OCI-LY7 (cell line): ENCODE measurements at regions of chr1 and their contacts with region 1.

Region 1: DNA sequence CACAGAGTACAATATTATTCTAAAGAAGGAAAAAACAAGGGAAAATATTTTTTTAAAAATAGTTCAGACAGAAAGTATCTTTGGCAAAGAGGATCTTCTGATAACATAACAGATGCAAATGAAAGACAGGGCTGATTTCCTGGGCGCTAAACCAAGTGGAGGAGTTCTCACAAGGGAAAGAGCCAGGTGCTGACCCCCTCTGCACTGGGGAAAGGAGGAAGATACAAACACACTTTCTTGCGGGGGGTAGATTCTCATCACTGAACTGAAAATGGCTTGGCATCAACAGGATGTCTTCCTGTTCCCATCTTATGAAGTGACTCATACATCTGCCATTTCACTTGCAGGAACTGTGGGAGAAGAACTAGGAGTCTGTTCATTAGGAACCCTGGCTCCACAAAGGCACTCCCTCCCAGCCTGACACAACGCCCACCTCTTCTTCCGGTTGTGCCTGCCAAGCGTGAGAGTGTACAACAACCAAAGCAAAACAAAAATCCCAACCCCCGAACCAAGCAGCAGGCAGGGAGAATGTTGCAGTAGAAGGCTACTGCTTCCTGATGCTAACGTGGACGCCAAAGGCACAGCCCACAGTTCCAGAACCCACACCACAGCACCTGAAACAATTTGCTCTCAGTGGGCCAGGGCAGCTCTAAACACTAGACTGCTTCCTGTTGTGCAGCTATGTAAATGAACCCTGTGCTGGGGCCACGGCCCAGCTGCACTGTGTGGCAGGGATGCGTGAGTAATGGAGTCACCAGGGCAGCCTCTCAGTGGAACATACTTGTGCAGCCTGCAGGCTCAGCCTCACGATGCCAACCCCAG is 51.0 kb downstream of the GADD45A start:
- DNase-seq: peak; percentile 93
- H3K4me3 ChIP-seq: peak overlapping the region; percentile 67
- H3K27ac ChIP-seq: peak overlapping the region; percentile 96
- H3K4me1 ChIP-seq: peaks cover 74% of the 10 kb centered on the region
- CTCF ChIP-seq: no peak

Region 2: DNA sequence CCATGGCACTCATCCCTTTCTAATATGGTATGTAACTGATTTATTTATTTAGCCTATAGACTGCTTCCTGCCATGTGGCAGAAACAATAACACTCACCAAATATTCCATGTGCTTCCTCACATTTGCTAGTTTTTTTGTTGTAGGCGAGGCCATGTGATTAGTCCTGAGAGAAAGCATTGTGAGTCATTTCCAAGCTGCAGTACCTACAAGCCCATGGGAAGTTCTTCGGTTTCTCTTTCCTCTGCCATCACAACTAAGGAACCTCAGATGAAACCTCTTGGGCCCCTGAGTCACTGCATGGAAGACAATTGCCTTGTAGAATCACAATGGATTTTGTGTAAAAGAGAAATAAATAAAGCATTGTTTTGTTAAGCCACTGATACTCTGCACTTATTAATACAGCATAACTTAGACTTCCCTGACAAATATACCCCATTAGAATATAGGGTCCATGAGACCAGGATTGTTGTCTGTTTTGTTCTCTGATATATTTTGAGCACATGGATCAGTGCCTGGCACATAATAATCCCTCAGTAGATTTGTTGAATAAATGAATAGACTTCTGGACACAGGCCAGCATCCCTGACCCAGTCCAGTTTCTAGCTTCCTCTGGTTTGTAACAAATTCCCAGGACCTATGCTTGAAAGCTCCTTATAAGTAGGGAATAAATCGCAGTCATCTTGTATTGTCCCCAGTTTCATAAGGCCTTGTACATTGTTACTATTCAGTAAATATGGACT is 109.4 kb before region 1 on chr1:
- CTCF ChIA-PET with region 1: no interaction called
- POLR2A ChIA-PET with region 1: no interaction called
- intact Hi-C with region 1: no loop called
- DNase-seq: no peak
- H3K4me3 ChIP-seq: no peak overlapping the region
- H3K27ac ChIP-seq: no peak overlapping the region
- H3K4me1 ChIP-seq: no peaks in the 10 kb centered on the region
- CTCF ChIP-seq: no peak

Region 3: GRCh38 chr1:67674260-67675011 is 61.6 kb before region 1 on chr1:
- CTCF ChIA-PET with region 1: no interaction called
- POLR2A ChIA-PET with region 1: interaction called, 38 read pairs
- intact Hi-C with region 1: loop called (anchors 2 kb)
- DNase-seq: peak; percentile 77
- H3K4me3 ChIP-seq: peak overlapping the region; percentile 20
- H3K27ac ChIP-seq: peak overlapping the region; percentile 85
- H3K4me1 ChIP-seq: peaks cover 48% of the 10 kb centered on the region
- CTCF ChIP-seq: no peak

Region 4: DNA sequence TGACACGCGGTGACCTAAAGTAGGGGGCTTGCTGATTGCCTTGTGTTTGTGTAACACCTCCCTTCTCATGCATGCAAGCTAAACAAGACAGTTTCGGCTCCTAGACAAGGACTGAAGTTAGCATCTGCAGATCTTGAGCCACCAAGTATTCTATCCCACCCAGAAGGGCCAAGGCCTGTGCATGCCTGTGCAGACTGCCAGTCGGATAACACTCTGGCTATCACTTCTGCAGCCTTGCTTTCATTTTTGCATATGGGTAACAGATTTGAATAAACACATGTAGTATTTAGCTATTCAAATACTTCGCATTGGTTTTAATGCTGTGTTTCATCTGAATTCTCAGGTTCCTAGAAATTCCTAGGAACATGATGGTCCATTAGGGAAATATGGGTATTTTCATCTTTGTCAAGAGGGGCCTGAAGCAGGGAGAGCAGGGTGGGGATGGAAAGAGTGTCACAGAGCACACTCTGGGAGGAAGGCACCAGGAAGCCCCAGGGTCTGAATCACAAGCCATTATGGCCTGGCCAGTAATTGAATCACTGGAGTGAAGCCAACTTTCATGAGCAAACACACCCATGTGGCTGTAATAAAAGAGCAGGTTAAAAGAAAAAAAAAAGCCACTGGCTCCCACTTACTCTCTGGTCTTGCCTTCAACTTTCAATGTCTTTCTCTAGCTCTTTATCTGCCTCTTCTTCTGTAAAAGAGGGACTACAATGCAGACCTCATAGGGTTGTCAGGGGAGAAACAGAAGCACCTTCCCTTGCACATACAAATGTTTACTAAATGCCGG is 22.8 kb before region 1 on chr1:
- CTCF ChIA-PET with region 1: interaction called, 4 read pairs
- POLR2A ChIA-PET with region 1: interaction called, 21 read pairs
- intact Hi-C with region 1: loop called (anchors 2 kb)
- DNase-seq: peak; percentile 63
- H3K4me3 ChIP-seq: peak overlapping the region; percentile 10
- H3K27ac ChIP-seq: peak overlapping the region; percentile 67
- H3K4me1 ChIP-seq: peaks cover 44% of the 10 kb centered on the region
- CTCF ChIP-seq: no peak

Region 5: GRCh38 chr1:67748630-67749029 is 12.6 kb after region 1 on chr1:
- CTCF ChIA-PET with region 1: interaction called, 4 read pairs
- POLR2A ChIA-PET with region 1: interaction called, 84 read pairs
- intact Hi-C with region 1: no loop called
- DNase-seq: no peak
- H3K4me3 ChIP-seq: no peak overlapping the region
- H3K27ac ChIP-seq: no peak overlapping the region
- H3K4me1 ChIP-seq: peaks cover 54% of the 10 kb centered on the region
- CTCF ChIP-seq: no peak

Region 6: GRCh38 chr1:67760030-67760821 is 24.2 kb after region 1 on chr1:
- CTCF ChIA-PET with region 1: interaction called, 7 read pairs
- POLR2A ChIA-PET with region 1: interaction called, 40 read pairs
- intact Hi-C with region 1: loop called (anchors 1 kb)
- DNase-seq: peak; percentile 84
- H3K4me3 ChIP-seq: no peak overlapping the region
- H3K27ac ChIP-seq: peak overlapping the region; percentile 39
- H3K4me1 ChIP-seq: peaks cover 30% of the 10 kb centered on the region
- CTCF ChIP-seq: peak; percentile 100